Psoas muscle (tissue), 8 donors: ENCODE measurements at regions of chr2 and their contacts with region 1.

Region 1: DNA sequence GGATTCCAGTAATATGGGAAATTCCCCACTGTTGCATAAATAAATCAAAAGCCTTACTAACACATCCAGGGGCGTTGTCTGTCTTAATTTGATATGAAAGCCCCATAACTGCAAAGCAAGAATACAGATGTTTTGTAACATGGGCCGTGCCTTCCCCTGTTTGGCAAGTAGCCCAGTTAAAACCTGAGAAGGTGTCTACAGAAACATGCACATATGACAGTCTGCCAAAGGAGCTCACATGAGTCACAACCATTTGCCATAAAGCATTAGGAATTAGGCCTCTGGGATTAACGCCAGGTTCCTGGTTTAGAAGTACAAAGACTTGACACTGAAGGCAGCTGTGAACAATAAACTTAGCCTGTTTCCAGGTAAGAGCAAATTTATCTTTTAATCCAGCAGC is 43.1 kb upstream of the LONRF2 start:
- DNase-seq: no peak
- ATAC-seq: peak in 3 of 4 donors; percentile 57 to 70 (median 60)
- H3K4me3 ChIP-seq: no peak overlapping the region
- H3K27ac ChIP-seq: no peak overlapping the region
- H3K4me1 ChIP-seq: peaks cover 8% of the 10 kb centered on the region
- H3K27me3 ChIP-seq: no peaks in the 10 kb centered on the region
- CTCF ChIP-seq: no peak

Region 2: DNA sequence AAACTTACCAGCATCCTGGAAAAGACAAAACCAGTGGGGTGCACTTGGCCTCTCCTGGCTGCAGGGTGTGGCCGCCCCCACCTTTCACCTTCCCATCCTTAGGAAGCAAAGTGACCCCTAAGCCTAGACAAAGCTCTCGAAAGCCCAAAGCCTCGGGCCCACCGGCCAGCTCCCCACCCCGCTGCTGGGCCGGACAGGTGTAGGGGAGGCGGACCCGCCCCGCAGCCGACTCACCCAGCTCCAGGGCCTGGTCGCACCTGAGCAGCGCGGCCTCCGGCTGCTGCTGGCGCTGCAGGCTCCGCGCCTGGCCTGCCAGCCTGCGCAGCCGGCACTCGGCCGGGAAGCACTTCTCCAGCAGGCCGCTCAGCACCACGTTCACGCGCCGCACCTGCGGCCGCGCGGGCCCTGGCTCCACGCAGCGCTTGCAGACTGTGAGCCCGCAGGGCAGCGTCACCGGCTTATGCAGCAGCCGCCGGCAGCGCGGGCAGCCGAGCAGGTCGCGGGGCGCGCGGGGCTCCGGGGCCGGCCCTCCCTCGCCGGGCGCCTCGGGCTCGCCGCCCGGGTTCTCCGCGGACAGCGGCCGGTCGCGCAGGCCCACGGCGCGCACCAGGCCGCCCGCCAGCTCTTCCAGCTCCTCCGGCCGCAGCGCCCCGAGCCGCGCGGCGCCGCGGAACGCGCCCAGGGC is 44.1 kb before region 1 on chr2:
- intact Hi-C with region 1: loop called in 1 of 2 experiments (anchors 5 kb)
- DNase-seq: peak; percentile 41 to 67
- ATAC-seq: peak; percentile 74 to 83 (median 76)
- H3K4me3 ChIP-seq: peak overlapping the region; percentile 75
- H3K27ac ChIP-seq: peak overlapping the region; percentile 90
- H3K4me1 ChIP-seq: peaks cover 9% of the 10 kb centered on the region
- H3K27me3 ChIP-seq: peaks cover 0 to 4% (median 0%) of the 10 kb centered on the region in 3 donors
- CTCF ChIP-seq: peak; percentile 38

Region 3: GRCh38 chr2:100407108-100407507 is 41.7 kb after region 1 on chr2:
- intact Hi-C with region 1: no loop called
- DNase-seq: no peak
- ATAC-seq: peak in 3 of 4 donors; percentile 27 to 58 (median 57)
- H3K4me3 ChIP-seq: no peak overlapping the region
- H3K27ac ChIP-seq: no peak overlapping the region
- H3K4me1 ChIP-seq: no peaks in the 10 kb centered on the region
- H3K27me3 ChIP-seq: no peaks in the 10 kb centered on the region
- CTCF ChIP-seq: no peak

Region 4: GRCh38 chr2:100460904-100461530 is 95.6 kb after region 1 on chr2:
- intact Hi-C with region 1: no loop called
- DNase-seq: no peak
- ATAC-seq: no peak
- H3K4me3 ChIP-seq: no peak overlapping the region
- H3K27ac ChIP-seq: no peak overlapping the region
- H3K4me1 ChIP-seq: no peaks in the 10 kb centered on the region
- H3K27me3 ChIP-seq: no peaks in the 10 kb centered on the region
- CTCF ChIP-seq: no peak

Region 5: DNA sequence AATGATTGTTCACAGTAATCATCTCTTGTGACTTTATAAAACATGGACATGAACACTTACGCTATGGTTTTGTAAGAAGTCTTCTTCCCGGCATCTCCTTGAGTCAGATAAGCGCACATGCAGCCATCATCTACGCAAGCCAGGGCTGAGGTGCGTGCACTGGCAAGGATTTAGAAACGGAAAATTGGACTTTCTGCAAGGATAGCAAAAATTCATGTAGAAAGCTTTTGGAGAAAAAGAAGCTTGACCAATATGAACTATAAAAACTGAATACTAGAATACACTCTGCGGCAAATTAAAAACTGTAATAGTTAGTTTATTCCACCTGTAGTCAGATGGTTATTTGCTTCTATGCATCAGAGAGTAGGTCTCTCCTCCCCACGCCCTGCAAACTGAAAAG is 111.2 kb after region 1 on chr2:
- intact Hi-C with region 1: no loop called
- DNase-seq: no peak
- ATAC-seq: no peak
- H3K4me3 ChIP-seq: no peak overlapping the region
- H3K27ac ChIP-seq: no peak overlapping the region
- H3K4me1 ChIP-seq: no peaks in the 10 kb centered on the region
- H3K27me3 ChIP-seq: peaks cover 0 to 5% (median 0%) of the 10 kb centered on the region in 3 donors
- CTCF ChIP-seq: no peak

Region 6: DNA sequence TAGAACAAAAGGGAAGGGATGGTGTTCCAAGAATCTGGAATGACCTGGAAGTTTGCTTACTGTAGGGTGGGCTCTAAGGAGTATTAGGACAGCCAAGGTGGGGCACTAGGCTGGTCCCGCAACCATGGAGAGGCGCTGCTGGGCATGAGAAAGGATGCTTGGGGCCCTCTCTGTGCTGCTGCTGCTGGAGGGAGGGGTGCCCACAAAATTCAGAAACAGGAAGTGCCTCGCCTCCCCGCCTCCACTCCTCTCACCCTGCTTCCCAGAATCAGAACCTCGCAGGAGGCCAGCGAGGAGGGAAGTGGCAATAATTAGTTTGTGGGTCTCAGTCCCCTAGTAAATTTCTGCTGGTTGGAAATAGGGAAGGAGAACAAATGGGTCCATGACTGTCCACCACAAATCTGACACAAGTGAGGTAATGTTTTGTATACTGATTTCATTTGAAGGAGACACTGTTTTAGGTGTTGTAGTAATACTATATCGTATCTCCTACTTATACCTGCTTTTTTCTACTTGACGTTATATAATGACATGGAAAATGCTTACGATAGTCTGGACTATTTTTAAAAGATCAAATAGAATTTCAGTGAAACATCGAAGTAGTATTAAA is 189.5 kb after region 1 on chr2:
- intact Hi-C with region 1: no loop called
- DNase-seq: no peak
- ATAC-seq: no peak
- H3K4me3 ChIP-seq: no peak overlapping the region
- H3K27ac ChIP-seq: no peak overlapping the region
- H3K4me1 ChIP-seq: no peaks in the 10 kb centered on the region
- H3K27me3 ChIP-seq: no peaks in the 10 kb centered on the region
- CTCF ChIP-seq: no peak